WTC11 (cell line): ENCODE measurements at regions of chr6 and their contacts with region 1.

Region 1: GRCh38 chr6:107318100-107318736 is 141.1 kb downstream of the PDSS2 start:
- DNase-seq: peak; percentile 61
- ATAC-seq: peak; percentile 100
- H3K4me3 Mint-ChIP-seq: no peak overlapping the region
- H3K27ac Mint-ChIP-seq: no peak overlapping the region
- H3K4me1 Mint-ChIP-seq: peaks cover 5% of the 10 kb centered on the region
- H3K27me3 Mint-ChIP-seq: no peaks in the 10 kb centered on the region
- CTCF ChIP-seq: no peak

Region 2: GRCh38 chr6:107284805-107285204 is 33.4 kb before region 1 on chr6:
- CTCF ChIA-PET with region 1: interaction called, 14 read pairs
- POLR2A ChIA-PET with region 1: no interaction called
- DNase-seq: no peak
- ATAC-seq: no peak
- H3K4me3 Mint-ChIP-seq: no peak overlapping the region
- H3K27ac Mint-ChIP-seq: peak overlapping the region; percentile 55; the same call in 1 of the 2 replicates
- H3K4me1 Mint-ChIP-seq: peaks cover 28% of the 10 kb centered on the region
- H3K27me3 Mint-ChIP-seq: no peaks in the 10 kb centered on the region
- CTCF ChIP-seq: no peak

Region 3: DNA sequence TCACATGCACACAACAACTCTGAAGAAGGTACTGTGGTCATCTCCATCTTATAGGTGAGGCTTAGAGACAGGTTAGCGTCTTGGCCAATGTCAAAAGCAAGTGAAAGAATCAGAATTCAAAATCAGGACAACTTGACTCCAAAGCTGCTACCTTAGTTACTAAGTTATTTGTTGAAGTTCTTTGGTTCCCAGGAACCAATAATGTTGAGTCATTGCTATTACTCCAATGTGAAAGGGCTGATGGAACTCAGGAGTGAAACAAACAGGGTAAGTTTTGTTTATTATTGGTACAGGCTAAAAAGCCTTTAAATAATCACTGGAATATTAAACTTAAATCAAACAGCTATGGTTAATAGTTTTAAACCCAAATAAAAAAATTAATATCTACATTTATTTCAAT is 30.0 kb after region 1 on chr6:
- CTCF ChIA-PET with region 1: interaction called, 12 read pairs
- POLR2A ChIA-PET with region 1: interaction called, 3 read pairs
- DNase-seq: no peak
- ATAC-seq: no peak
- H3K4me3 Mint-ChIP-seq: no peak overlapping the region
- H3K27ac Mint-ChIP-seq: peak overlapping the region; percentile 44; the same call in 1 of the 2 replicates
- H3K4me1 Mint-ChIP-seq: peaks cover 8% of the 10 kb centered on the region
- H3K27me3 Mint-ChIP-seq: no peaks in the 10 kb centered on the region
- CTCF ChIP-seq: no peak

Region 4: DNA sequence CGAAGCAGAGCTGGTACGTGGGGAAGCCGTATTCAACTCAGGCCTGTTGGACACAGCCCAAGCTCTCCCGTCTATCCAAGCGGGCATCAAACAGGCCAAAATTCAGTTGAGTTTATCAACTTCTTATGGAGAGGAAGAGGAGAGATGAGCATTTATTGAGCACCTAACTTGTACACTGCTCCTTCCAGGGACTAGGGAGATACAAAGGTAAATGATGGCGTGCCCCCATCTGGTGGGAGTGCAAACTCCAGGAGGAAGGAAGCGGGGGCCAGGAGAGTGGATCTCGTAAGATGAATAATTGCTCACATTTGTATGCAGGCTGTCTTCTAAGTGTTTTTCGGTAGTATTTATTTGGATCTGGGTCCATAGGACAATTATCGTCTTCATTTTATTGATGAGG is 318.3 kb after region 1 on chr6:
- CTCF ChIA-PET with region 1: interaction called, 10 read pairs
- POLR2A ChIA-PET with region 1: no interaction called
- DNase-seq: peak; percentile 58
- ATAC-seq: peak; percentile 56
- H3K4me3 Mint-ChIP-seq: no peak overlapping the region
- H3K27ac Mint-ChIP-seq: no peak overlapping the region
- H3K4me1 Mint-ChIP-seq: peaks cover 9% of the 10 kb centered on the region
- H3K27me3 Mint-ChIP-seq: peaks cover 33% of the 10 kb centered on the region
- CTCF ChIP-seq: no peak